ACHN (cell line): ENCODE measurements at regions of chr12 and their contacts with region 1.

Region 1: GRCh38 chr12:89461649-89462612 is 62.7 kb downstream of the GALNT4 start:
- DNase-seq: peak; percentile 85

Region 2: GRCh38 chr12:89040146-89040964 is 421.6 kb before region 1 on chr12:
- in situ Hi-C with region 1: loop called (anchors 25 kb)
- DNase-seq: no peak

Region 3: DNA sequence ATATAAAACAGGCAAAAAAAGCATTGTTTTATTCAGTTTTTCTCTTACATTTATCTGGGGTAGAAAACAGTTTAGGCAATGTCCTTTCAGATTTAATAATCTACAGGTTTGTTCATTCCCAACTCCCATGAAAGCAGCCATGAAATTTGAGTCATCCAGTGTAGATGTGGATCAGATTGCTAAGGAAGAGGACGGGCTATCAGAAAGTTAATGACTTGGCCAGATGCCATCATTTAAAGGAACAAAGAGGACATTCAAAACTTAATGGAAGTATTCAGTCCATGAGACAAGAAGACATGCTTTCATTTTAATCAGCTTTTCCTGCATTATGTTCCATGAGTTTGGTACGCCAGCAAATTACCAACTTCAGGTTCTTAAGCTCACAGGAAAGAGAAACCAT is 95.0 kb after region 1 on chr12:
- in situ Hi-C with region 1: no loop called
- DNase-seq: no peak

Region 4: GRCh38 chr12:89663577-89664357 is 201.8 kb after region 1 on chr12:
- in situ Hi-C with region 1: no loop called
- DNase-seq: peak; percentile 10

Region 5: DNA sequence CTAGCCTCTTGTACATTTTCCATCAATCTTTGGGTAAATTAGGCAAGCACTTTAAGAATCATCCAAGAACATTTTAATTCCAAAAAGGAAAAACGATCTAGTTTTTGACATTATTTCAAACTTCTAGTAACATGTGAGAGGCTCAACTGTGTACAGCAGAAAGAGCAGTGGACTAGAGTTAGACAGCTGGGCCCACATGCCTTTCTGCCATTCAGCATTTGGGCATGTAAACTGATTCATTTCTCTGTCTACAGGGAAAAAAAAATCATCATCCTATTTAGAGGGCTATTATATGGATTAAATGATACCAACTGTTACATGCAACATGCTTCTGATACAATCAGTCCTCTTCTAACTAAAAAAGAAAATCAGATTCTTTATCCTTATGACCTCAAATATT is 229.0 kb after region 1 on chr12:
- in situ Hi-C with region 1: no loop called
- DNase-seq: no peak

Region 6: GRCh38 chr12:89840162-89840922 is 378.4 kb after region 1 on chr12:
- in situ Hi-C with region 1: no loop called
- DNase-seq: no peak